ENCODE measurements at regions of chr17 and their contacts with region 1.

Region 1: GRCh38 chr17:52297230-52298010 is 138.9 kb upstream of the CA10 start:
- DNase-seq: peak; percentile 5
- ATAC-seq: peak; percentile 36; the same call in 2 of the 3 replicates
- H3K4me3 ChIP-seq: no peak overlapping the region
- H3K27ac ChIP-seq: no peak overlapping the region
- H3K4me1 ChIP-seq: no peaks in the 10 kb centered on the region
- H3K27me3 ChIP-seq: no peaks in the 10 kb centered on the region
- CTCF ChIP-seq: no peak
- EP300 ChIP-seq: no peak
- POLR2A ChIP-seq: no peak
- RAD21 ChIP-seq: no peak

Region 2: GRCh38 chr17:52170963-52171572 is 126.4 kb before region 1 on chr17:
- CTCF ChIA-PET with region 1: no interaction called
- POLR2A ChIA-PET with region 1: no interaction called
- in situ Hi-C with region 1: no loop called
- intact Hi-C with region 1: loop called (anchors 2 kb)
- DNase-seq: peak; percentile 13
- ATAC-seq: peak; percentile 81
- H3K4me3 ChIP-seq: no peak overlapping the region
- H3K27ac ChIP-seq: no peak overlapping the region
- H3K4me1 ChIP-seq: no peaks in the 10 kb centered on the region
- H3K27me3 ChIP-seq: no peaks in the 10 kb centered on the region
- CTCF ChIP-seq: peak; percentile 66
- EP300 ChIP-seq: no peak
- POLR2A ChIP-seq: no peak
- RAD21 ChIP-seq: no peak

Measured in HepG2 (cell line).